Left ventricle myocardium superior (tissue), 1 donor: ENCODE measurements at regions of chr6 and their contacts with region 1.

Region 1: GRCh38 chr6:134640975-134641429 is 308.9 kb downstream of the ALDH8A1 start:
- DNase-seq: peak; percentile 71
- ATAC-seq: peak; percentile 93

Region 2: GRCh38 chr6:134174672-134175198 is 466.3 kb before region 1 on chr6:
- intact Hi-C with region 1: loop called (anchors 2 kb)
- DNase-seq: peak; percentile 97
- ATAC-seq: peak; percentile 93

Region 3: DNA sequence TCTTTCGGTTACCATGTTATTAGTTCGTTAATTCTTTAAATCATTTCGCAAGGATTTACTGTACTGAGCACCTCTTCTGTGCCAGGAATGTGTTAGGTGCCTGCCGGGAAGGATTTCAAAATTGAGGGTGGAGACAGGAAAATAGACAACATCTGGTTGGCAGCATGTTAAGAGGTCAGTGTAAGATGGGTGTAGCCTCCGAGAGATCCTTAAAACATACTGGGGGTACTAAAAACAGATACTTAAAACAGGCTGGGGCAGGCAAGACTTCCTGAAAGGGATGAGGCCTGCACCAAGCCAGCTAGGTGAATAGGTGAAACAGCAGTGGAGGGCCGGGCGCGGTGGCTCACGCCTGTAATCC is 145.1 kb before region 1 on chr6:
- intact Hi-C with region 1: no loop called
- DNase-seq: no peak
- ATAC-seq: no peak

Region 4: GRCh38 chr6:134750669-134751068 is 109.7 kb after region 1 on chr6:
- intact Hi-C with region 1: no loop called
- DNase-seq: no peak
- ATAC-seq: no peak

Region 5: DNA sequence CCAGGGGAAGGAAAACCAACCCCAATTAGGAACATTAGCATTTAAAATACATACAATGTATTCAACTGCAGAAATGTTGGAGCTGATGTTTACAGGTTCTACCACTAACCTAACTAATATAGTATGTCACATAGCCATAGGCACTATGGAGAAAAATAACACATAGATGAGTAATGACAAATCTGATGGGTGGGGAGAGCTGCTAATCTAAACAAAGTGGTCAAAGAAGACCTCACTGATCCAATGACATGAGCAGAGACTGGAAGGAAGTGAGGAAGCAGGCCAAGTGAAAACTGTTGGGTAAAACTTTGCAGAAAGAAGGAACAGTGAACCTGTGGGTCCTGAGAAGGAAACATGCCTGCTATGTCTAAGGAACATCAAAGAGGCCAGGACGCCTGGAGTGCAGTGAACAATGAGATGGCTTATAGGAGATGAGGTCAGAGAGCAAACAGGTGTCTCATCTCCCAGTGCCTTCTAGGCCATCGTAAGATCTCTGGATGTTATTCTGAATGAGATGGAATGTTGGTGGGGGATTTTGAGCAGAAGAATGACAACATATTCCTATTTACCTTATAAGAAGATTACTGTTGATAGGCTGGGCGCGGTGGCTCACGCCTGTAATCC is 173.2 kb after region 1 on chr6:
- intact Hi-C with region 1: loop called (anchors 10 kb)
- DNase-seq: no peak
- ATAC-seq: no peak